Left cardiac atrium (tissue), 4 donors: ENCODE measurements at regions of chr14 and their contacts with region 1.

Region 1: GRCh38 chr14:68248481-68249255 is 429.1 kb downstream of the RAD51B start:
- DNase-seq: no peak
- ATAC-seq: peak; percentile 76 to 77

Region 2: DNA sequence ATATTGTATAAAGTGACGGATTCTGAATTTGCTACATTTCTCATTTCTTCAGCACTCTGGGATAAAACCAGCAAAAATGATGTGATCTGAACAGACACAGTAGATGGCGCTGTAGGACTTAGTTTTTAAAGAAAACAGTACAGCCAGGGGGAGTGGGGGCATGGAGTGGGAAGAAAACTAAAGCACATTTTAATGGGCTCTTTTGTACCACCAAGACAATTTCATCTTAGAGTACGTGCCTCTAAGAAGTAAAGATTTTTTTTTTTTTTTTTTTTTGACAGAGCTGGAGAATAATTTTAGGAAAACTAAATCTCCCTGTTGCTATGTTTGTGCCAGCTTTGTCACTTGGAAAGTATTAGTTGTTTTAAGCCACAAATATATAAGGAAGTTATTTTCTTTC is 304.7 kb before region 1 on chr14:
- intact Hi-C with region 1: loop called (anchors 5 kb)
- DNase-seq: peak; percentile 72
- ATAC-seq: peak; percentile 69 to 75

Region 3: DNA sequence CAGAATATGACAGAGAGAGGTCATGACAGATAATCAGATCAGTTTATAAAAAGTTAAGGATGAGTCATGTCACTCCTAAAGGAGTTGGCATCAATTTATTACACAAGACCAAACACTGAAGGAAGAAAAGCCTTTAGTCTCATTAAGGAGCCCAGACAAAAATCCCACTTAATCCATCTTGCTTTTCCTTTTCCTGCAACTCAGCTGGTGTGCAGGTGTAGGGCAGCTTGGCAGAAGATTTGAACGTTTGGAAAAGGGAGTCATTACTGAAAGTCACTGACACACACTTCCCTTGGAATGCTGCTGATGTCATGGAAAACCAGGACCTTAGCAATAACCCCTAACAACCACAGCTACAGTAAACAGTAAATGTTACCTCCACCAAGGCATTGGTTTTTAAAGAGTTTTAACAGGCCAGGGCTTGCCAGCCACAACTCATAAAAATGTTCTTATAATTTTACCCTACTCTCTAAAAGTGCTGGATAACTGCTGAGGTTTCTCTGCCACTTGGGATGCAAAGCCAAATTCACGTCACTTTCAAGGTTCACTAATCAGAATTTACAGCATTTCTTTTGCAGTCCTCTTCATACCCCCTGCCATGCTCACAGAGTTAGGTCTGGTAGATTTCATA is 108.4 kb before region 1 on chr14:
- intact Hi-C with region 1: loop called in 1 of 2 experiments (anchors 5 kb)
- DNase-seq: peak; percentile 25
- ATAC-seq: peak; percentile 49 to 73

Region 4: GRCh38 chr14:68318828-68319227 is 70.2 kb after region 1 on chr14:
- intact Hi-C with region 1: no loop called
- DNase-seq: no peak
- ATAC-seq: no peak

Region 5: GRCh38 chr14:68548194-68549056 is 299.8 kb after region 1 on chr14:
- intact Hi-C with region 1: loop called in 1 of 2 experiments (anchors 2 kb)
- DNase-seq: peak; percentile 93
- ATAC-seq: peak; percentile 89 to 90

Region 6: GRCh38 chr14:68559696-68560348 is 311.2 kb after region 1 on chr14:
- intact Hi-C with region 1: no loop called
- DNase-seq: no peak
- ATAC-seq: no peak

Region 7: DNA sequence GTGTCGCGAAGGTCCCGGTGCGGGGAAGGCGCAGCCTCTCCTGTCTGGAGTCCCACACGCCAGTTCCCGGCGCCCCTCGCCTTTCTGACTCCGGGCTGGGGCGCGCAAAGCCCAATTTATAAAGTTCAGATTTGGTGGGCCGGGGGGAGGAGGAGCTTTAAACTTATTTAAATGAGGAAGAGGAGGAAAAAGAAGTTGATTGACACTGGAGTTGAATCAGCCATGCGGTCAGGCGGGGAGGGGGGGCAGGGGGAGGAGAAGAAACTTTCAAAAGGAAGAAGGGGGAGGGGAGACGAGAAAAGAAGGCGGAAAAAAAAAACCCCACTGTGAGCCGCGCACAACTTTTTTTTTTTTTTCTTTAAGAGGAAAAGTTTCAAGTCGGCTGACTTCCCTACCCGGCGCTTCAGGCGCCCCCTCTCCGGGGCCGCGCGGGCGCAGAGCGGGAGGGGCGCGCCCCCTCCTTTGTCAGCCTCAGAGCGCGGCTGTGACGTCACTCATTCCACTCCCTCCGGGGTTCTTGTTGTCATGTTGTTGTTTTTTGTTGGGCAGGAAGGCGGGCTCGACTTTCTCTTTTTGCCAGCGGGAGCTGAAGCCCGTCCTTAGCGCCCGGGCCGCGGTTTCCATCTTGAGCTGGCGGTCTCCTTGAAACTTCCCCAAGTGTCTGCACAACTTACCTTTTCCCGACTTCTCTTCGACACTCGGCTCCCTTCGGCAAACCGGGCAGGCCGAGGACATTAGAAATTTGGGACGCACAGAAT is 544.5 kb after region 1 on chr14 and contains the start of gene ZFP36L1:
- intact Hi-C with region 1: loop called in 1 of 2 experiments (anchors 2 kb)
- DNase-seq: peak; percentile 96
- ATAC-seq: peak; percentile 58 to 68
- total RNA-seq, gene ZFP36L1: 89.6 to 105 TPM

Region 8: GRCh38 chr14:68816262-68816942 is 567.7 kb after region 1 on chr14:
- intact Hi-C with region 1: loop called (anchors 1 to 5 kb)
- DNase-seq: peak; percentile 93
- ATAC-seq: peak; percentile 91 to 92